Cardiac septum (tissue), 1 donor: ENCODE measurements at regions of chr3 and their contacts with region 1.

Region 1: GRCh38 chr3:30353711-30354467 is 252.5 kb upstream of the TGFBR2 start:
- DNase-seq: no peak

Region 2: DNA sequence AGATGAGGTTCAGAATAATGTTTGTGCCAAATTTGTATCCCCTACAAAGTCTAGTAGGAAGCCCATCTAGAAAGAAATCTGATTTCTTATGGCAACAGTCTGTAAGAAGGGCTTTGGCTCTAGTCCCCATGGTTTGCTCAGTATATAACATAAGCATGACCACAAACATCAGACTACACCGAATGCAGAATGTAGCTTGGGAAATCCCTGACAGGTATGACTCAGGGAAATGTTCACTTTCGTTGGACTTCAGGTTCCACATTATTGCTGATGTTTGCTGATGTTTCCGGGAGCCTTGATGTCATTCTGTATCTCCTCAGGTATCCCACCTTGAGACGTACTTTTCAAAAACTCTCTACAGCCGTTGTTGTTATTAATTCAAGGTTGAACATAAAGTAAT is 51.9 kb before region 1 on chr3:
- intact Hi-C with region 1: no loop called
- DNase-seq: no peak

Region 3: DNA sequence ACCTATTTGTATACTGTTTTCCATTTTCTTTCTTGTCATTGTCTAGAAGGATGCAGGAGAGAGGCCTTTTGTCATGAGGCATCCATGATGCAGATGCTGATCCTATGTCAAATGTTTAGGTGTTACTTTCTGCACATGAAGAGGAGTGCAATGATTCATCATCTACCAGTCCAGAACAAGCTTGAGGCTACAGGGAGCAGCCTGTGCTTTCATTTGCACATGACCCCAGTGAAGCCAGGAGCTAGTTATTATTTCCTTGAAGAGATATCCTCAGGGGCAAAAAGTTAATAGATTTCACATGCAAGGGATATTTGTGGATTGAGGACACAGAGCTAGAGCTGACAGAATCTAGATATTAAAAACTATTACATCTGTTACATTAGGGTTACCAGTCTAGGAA is 48.1 kb after region 1 on chr3:
- intact Hi-C with region 1: no loop called
- DNase-seq: no peak

Region 4: DNA sequence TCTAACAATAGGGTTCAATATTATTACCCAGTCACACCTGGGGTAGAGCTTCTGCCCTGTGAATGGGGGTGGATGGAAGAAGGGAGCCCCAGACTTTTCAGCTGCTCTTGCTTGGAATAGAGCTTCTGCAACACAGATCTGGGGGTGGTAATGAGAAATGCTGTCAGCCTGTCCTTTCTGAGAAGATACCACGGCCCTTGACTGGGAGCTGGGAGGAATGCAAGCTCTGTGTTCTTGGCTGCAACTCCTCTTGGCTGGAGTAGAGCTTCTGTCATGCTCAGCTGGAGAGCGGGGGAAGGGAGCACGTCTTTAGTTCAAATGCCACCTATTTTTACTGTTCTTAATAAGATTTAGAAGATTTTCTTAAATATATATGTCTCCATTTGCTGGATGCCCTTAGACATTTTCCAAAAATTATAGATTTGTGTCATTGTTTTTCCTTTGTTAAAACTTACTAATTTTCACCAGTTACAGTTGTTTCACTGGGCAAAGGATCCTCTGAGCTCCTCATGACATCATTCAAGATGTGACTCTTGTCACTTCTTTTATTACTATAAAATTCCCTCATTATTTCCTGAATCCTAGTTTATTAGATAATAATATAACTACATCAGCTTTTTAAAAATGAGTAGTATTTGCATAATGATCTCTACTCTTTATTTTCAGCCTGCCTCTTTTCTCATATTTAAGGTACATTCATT is 72.6 kb after region 1 on chr3:
- intact Hi-C with region 1: loop called (anchors 1 kb)
- DNase-seq: peak; percentile 80

Region 5: GRCh38 chr3:30437171-30437601 is 83.3 kb after region 1 on chr3:
- intact Hi-C with region 1: loop called (anchors 5 kb)
- DNase-seq: no peak